ENCODE measurements at regions of chr12 and their contacts with region 1.

Region 1: DNA sequence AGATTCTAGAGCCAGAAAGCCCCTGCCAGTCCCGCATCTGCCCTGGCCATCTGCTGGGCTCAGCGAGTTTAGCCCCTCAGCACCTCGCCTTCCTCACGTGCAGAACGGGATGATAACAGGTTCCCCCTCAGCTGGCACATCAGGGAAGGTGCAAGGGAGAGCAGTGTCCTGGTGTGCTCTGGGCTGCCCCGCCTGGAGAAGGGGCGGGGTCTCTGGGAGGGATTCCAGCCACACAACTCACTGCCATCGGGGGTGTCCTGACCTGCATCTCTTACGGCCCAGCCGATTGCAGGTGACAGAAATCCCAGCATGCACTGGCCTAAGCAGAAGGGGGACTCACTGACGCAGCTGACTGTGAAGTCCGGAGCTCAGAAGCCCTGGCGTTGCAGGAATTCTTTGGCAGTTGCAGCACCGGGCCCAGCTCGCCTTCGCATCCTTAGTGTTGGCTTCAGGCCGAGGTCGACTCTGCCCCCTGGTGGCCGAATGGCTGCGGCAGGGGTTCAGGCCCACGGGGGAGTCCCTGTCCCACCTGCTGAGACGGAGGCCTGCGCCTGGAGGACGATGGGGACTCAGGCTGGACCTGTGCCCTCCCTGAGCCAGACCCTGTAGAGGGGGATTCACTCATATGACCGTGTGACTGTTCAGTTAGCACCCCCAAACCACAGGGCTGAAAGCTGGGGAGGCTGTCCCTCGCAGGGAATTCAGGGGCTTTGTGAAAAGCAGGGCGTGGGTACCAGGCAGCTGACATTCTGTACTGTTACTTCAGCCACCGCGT is 178.6 kb downstream of the ADGRD1 start:
- DNase-seq: peak; percentile 73 to 79
- ATAC-seq: peak; percentile 78 to 92
- H3K4me3 ChIP-seq: no peak overlapping the region
- H3K27ac ChIP-seq: 0 out of 6 replicates have a peak overlapping the region, but pooled peaks of 1 of the 2 experiments have one; percentile 3
- H3K4me1 ChIP-seq: peaks cover 17% of the 10 kb centered on the region; the same call in 2 of the 3 replicates
- CTCF ChIP-seq: peak; percentile 71
- EP300 ChIP-seq: no peak
- POLR2A ChIP-seq: no peak
- RAD21 ChIP-seq: peak; percentile 61 to 63

Region 2: DNA sequence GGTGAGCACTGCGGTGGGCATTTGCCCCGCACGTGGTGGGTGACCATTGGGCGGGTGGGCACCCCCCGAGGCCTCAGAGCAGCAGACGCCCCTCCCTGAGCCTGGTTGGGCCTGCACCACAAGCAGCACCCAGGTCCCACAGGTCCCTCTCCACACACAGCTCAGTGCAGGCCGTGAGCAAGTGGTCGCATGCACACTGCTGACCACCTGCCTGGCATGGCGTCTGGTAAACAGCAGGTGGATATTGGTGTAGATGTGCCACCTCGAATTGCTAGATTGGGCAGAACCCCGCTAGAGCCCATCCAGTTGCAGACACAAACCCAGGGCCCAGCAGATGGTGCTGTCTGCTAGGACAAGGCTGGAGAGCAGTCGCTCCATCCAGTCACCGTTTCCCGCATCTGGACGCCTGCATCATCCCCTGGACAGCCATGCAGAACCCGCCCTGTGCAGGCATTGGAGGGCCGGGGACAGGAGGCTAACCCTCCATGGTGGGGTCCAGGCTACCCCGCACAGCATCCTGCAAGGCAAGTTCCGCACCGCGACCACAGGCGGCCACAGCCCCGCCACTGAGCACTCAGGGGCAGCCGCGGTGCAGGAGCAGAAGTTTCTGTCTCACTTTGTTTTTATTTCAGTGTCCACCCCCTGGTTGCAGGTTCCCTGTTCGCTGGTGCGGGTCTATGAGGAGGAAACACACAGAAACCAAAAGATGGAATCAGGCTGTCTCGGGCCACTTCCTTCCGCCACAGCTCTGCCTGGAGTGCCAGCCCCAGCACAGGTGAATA is 370.6 kb before region 1 on chr12:
- CTCF ChIA-PET with region 1: interaction called, 10 read pairs
- POLR2A ChIA-PET with region 1: no interaction called
- DNase-seq: peak; percentile 72 to 82
- ATAC-seq: peak; percentile 87 to 94
- H3K4me3 ChIP-seq: no peak overlapping the region
- H3K27ac ChIP-seq: no peak overlapping the region
- H3K4me1 ChIP-seq: no peaks in the 10 kb centered on the region
- CTCF ChIP-seq: peak; percentile 60
- EP300 ChIP-seq: no peak
- POLR2A ChIP-seq: no peak
- RAD21 ChIP-seq: peak; percentile 81 to 91

Region 3: DNA sequence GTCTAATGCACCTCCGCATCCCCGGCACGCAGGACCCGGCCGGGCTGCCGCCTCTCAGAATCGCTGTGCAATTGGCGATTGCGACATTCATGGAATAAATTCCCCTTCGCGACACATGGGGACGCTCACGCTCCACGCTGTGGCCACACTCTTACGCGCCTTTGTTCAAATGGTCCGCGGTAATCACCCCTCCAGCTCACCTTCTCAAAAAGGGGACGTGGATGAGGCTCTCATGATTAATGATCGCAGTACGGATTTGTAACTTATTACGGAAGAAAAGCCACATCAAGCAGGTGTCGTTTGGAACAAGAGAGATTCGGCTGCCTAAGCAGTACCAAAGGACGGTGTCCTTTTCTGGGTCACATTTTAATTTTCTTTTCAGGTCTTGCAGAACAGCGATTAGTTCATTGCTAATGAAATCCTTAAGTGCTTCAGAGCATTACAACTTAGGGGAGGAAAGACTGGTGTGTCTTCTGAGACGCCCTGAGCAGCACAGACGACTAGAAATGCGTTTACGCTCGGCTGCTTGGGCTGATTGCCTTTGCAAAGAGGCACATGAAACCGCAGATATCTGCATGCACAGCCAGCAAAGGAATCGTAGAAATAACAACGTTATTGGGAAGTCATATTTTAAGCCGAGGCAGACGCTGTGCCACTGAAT is 215.9 kb before region 1 on chr12:
- CTCF ChIA-PET with region 1: interaction called, 45 read pairs
- POLR2A ChIA-PET with region 1: no interaction called
- DNase-seq: peak; percentile 56 to 74
- ATAC-seq: peak; percentile 48 to 90; a peak in 5 of 6 replicates
- H3K4me3 ChIP-seq: peak overlapping the region; percentile 21; the same call in 1 of the 3 replicates
- H3K27ac ChIP-seq: no peak overlapping the region
- H3K4me1 ChIP-seq: peaks cover 15% of the 10 kb centered on the region; the same call in 1 of the 3 replicates
- CTCF ChIP-seq: peak; percentile 92
- EP300 ChIP-seq: no peak
- POLR2A ChIP-seq: no peak
- RAD21 ChIP-seq: peak; percentile 97

Region 4: GRCh38 chr12:131116391-131117117 is 15.8 kb before region 1 on chr12:
- CTCF ChIA-PET with region 1: interaction called, 121 read pairs
- POLR2A ChIA-PET with region 1: no interaction called
- DNase-seq: peak; percentile 36 to 45
- ATAC-seq: peak; percentile 60 to 83; a peak in 5 of 6 replicates
- H3K4me3 ChIP-seq: no peak overlapping the region
- H3K27ac ChIP-seq: no peak overlapping the region; a peak in 1 of 6 replicates
- H3K4me1 ChIP-seq: peaks cover 16% of the 10 kb centered on the region
- CTCF ChIP-seq: peak; percentile 56
- EP300 ChIP-seq: no peak
- POLR2A ChIP-seq: no peak
- RAD21 ChIP-seq: peak; percentile 76 to 84

Region 5: DNA sequence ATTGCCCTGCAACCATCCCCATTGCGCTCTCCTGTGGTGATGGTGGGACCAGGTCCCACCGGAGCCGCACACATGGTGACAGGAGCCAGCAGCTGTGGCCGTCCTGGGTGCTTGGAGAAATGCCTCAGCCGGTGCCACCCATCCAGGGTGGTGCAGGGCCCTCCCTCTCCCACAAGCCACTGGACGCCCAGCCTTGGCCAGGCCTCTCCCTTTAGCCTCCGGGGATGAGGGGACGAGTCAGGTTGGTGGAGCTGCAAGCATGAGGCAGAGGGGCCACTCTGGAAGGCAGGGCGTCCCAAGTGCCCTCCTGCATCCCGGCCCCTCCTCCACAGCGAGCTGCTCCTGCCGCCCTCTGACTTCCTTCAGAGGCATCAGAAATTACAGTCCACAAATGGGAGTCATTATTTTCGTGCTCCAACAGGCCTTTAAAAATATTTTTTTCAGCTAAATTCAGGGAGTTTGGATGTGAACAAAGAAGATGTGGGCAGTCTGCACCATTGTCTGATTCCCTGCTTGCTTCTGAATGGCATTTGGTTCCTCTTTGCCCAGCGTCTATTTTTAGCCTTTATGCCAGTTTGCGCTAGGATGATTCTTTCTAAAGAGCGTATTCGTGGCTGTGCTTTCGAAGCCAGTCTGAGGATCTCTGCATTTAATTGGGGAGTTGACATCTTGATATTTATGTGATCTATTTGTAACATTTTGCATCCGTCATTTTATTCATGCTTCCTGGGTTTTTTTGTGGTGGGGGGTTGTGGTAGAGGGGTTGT is 10.8 kb after region 1 on chr12:
- CTCF ChIA-PET with region 1: interaction called, 20 read pairs
- POLR2A ChIA-PET with region 1: no interaction called
- DNase-seq: peak; percentile 55 to 65
- ATAC-seq: peak; percentile 70 to 83
- H3K4me3 ChIP-seq: 0 out of 3 replicates have a peak overlapping the region, but pooled peaks have one; percentile 11
- H3K27ac ChIP-seq: peak overlapping the region; percentile 59 to 87; a peak in 5 of 6 replicates
- H3K4me1 ChIP-seq: peaks cover 17% of the 10 kb centered on the region
- CTCF ChIP-seq: no peak
- EP300 ChIP-seq: no peak
- POLR2A ChIP-seq: no peak
- RAD21 ChIP-seq: no peak

Region 6: DNA sequence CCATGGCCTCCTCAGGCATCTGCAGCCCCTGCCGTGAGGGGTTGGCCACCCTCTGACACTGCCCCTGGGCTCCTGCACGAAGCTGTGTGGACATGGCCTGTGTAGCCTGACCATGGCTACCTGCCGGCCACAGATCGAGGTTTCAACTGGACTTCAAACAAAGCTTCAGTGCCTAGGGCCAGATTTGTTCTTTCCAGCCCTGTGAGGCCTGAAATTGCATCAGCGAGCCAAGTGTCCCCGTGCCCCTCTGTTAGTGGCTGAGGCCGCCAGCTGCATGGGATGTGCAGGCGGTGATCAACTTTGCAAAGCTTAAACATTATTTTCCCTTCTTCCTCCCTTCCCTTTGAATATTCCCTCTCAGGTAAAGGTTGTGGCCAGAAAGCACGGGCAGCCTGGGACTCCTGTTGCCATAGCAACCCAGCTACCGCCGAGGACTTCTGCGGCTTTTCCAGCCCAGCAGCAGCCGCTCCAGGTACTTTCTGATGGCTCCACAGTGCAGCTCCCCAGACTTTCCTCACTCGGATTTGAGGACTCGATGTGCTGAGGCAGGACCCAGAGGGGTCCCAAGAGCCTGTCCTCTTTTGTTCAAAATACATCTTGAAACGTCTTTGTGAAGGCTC is 976.0 kb after region 1 on chr12:
- CTCF ChIA-PET with region 1: no interaction called
- POLR2A ChIA-PET with region 1: no interaction called
- DNase-seq: no peak
- ATAC-seq: no peak
- H3K4me3 ChIP-seq: no peak overlapping the region
- H3K27ac ChIP-seq: no peak overlapping the region
- H3K4me1 ChIP-seq: no peaks in the 10 kb centered on the region
- CTCF ChIP-seq: no peak
- EP300 ChIP-seq: no peak
- POLR2A ChIP-seq: no peak
- RAD21 ChIP-seq: no peak

Measured in A549 (cell line).